ENCODE measurements at regions of chr1 and their contacts with region 1.

Region 1: GRCh38 chr1:33586111-33586510 is 113.7 kb downstream of the ZSCAN20 start:
- DNase-seq: no peak
- H3K4me3 ChIP-seq: no peak overlapping the region
- H3K27ac ChIP-seq: no peak overlapping the region
- H3K4me1 ChIP-seq: no peaks in the 10 kb centered on the region
- CTCF ChIP-seq: no peak

Region 2: DNA sequence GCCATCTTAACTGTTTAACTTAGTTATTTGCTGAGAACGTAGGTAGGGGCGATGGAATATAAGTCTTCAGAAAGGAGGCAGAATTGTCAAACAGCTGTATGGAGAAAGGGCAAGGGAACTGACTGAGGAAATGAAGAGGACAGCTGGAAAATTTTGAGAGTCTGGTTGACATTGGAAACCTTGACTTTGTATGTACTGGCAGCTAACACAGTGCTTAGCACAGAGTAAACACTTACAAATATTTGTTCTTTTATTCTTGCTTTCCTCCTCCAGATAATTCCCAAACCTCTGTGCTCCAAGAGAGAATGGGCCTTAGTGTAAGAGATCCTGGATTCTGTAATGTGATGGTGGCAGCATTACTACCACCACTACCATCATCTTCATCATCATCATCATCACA is 22.4 kb before region 1 on chr1:
- CTCF ChIA-PET with region 1: no interaction called
- POLR2A ChIA-PET with region 1: interaction called, 11 read pairs
- intact Hi-C with region 1: no loop called
- DNase-seq: no peak
- H3K4me3 ChIP-seq: no peak overlapping the region
- H3K27ac ChIP-seq: no peak overlapping the region
- H3K4me1 ChIP-seq: no peaks in the 10 kb centered on the region
- CTCF ChIP-seq: no peak